ENCODE measurements at regions of chr9 and their contacts with region 1.

Region 1: GRCh38 chr9:1460143-1460769 is 410.1 kb downstream of the DMRT2 start:
- DNase-seq: peak; percentile 25
- ATAC-seq: peak; percentile 89
- H3K4me3 ChIP-seq: no peak overlapping the region
- H3K27ac ChIP-seq: no peak overlapping the region
- H3K4me1 ChIP-seq: no peaks in the 10 kb centered on the region
- H3K27me3 ChIP-seq: no peaks in the 10 kb centered on the region
- CTCF ChIP-seq: peak; percentile 79 to 83 (median 80)
- EP300 ChIP-seq: no peak
- POLR2A ChIP-seq: no peak
- RAD21 ChIP-seq: peak; percentile 99

Region 2: DNA sequence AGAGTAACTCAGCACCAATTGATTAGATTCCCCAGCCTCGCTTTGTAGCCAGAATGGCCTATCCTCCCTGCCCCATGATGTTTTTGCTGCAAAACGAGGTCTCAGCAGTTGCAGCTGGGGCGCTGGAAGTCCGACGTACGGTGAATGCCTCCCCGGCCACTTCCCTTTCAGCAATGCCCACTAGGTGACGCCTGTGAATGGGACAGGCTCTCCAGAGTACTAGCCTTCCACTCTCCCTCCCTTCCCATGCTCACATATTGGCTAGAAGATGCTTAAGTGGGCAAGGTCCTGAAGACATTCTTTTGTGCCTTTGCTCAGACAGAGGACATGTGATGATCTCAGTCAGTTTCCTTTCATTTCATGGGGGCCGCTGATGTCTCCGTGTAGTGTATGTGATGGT is 359.3 kb before region 1 on chr9:
- CTCF ChIA-PET with region 1: interaction called, 4 read pairs
- POLR2A ChIA-PET with region 1: no interaction called
- RAD21 ChIA-PET with region 1: no interaction called
- SMC1A ChIA-PET with region 1: interaction called, 12 read pairs
- in situ Hi-C with region 1: no loop called
- intact Hi-C with region 1: no loop called
- DNase-seq: no peak
- ATAC-seq: peak; percentile 59
- H3K4me3 ChIP-seq: no peak overlapping the region
- H3K27ac ChIP-seq: no peak overlapping the region
- H3K4me1 ChIP-seq: no peaks in the 10 kb centered on the region
- H3K27me3 ChIP-seq: no peaks in the 10 kb centered on the region
- CTCF ChIP-seq: peak; percentile 28 to 49 (median 36); a peak in 4 of 6 replicates
- EP300 ChIP-seq: no peak
- POLR2A ChIP-seq: no peak
- RAD21 ChIP-seq: peak; percentile 40; the same call in 1 of the 2 replicates

Region 3: GRCh38 chr9:1373085-1373844 is 87.0 kb before region 1 on chr9:
- CTCF ChIA-PET with region 1: no interaction called
- POLR2A ChIA-PET with region 1: no interaction called
- RAD21 ChIA-PET with region 1: no interaction called
- SMC1A ChIA-PET with region 1: no interaction called
- in situ Hi-C with region 1: no loop called
- intact Hi-C with region 1: no loop called
- DNase-seq: no peak
- ATAC-seq: no peak
- H3K4me3 ChIP-seq: no peak overlapping the region
- H3K27ac ChIP-seq: no peak overlapping the region
- H3K4me1 ChIP-seq: no peaks in the 10 kb centered on the region
- H3K27me3 ChIP-seq: no peaks in the 10 kb centered on the region
- CTCF ChIP-seq: no peak
- EP300 ChIP-seq: no peak
- POLR2A ChIP-seq: no peak
- RAD21 ChIP-seq: no peak

Region 4: GRCh38 chr9:1383899-1384455 is 76.3 kb before region 1 on chr9:
- CTCF ChIA-PET with region 1: no interaction called
- POLR2A ChIA-PET with region 1: no interaction called
- RAD21 ChIA-PET with region 1: no interaction called
- SMC1A ChIA-PET with region 1: no interaction called
- in situ Hi-C with region 1: no loop called
- intact Hi-C with region 1: no loop called
- DNase-seq: no peak
- ATAC-seq: no peak
- H3K4me3 ChIP-seq: no peak overlapping the region
- H3K27ac ChIP-seq: no peak overlapping the region
- H3K4me1 ChIP-seq: no peaks in the 10 kb centered on the region
- H3K27me3 ChIP-seq: peaks cover 0 to 3% of the 10 kb centered on the region in 2 experiments; a peak in 1 of 4 replicates
- CTCF ChIP-seq: no peak
- EP300 ChIP-seq: no peak
- POLR2A ChIP-seq: no peak
- RAD21 ChIP-seq: no peak

Region 5: DNA sequence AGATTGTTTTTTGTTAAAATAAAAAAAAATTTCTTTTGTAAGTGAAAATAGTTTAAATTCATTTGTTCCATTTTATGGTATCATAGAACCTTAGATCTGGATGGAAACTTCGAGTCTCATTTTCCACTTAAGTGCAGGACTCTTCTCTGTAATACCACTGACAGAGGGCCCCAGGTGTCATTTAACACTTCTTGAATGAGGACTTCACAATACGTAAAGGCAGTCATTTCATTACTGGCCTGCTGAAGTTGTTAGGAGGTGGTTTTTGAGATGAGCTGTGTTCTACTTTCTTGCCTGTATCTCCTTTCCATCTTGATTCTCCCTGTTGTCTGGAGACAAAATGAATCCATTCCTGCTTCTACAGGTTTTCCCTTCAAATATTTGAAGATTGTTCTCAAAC is 45.2 kb after region 1 on chr9:
- CTCF ChIA-PET with region 1: interaction called, 4 read pairs
- POLR2A ChIA-PET with region 1: no interaction called
- RAD21 ChIA-PET with region 1: interaction called, 3 read pairs
- SMC1A ChIA-PET with region 1: interaction called, 10 read pairs
- in situ Hi-C with region 1: no loop called
- intact Hi-C with region 1: no loop called
- DNase-seq: no peak
- ATAC-seq: peak; percentile 59
- H3K4me3 ChIP-seq: no peak overlapping the region
- H3K27ac ChIP-seq: no peak overlapping the region
- H3K4me1 ChIP-seq: no peaks in the 10 kb centered on the region
- H3K27me3 ChIP-seq: no peaks in the 10 kb centered on the region
- CTCF ChIP-seq: no peak
- EP300 ChIP-seq: no peak
- POLR2A ChIP-seq: no peak
- RAD21 ChIP-seq: no peak

Region 6: DNA sequence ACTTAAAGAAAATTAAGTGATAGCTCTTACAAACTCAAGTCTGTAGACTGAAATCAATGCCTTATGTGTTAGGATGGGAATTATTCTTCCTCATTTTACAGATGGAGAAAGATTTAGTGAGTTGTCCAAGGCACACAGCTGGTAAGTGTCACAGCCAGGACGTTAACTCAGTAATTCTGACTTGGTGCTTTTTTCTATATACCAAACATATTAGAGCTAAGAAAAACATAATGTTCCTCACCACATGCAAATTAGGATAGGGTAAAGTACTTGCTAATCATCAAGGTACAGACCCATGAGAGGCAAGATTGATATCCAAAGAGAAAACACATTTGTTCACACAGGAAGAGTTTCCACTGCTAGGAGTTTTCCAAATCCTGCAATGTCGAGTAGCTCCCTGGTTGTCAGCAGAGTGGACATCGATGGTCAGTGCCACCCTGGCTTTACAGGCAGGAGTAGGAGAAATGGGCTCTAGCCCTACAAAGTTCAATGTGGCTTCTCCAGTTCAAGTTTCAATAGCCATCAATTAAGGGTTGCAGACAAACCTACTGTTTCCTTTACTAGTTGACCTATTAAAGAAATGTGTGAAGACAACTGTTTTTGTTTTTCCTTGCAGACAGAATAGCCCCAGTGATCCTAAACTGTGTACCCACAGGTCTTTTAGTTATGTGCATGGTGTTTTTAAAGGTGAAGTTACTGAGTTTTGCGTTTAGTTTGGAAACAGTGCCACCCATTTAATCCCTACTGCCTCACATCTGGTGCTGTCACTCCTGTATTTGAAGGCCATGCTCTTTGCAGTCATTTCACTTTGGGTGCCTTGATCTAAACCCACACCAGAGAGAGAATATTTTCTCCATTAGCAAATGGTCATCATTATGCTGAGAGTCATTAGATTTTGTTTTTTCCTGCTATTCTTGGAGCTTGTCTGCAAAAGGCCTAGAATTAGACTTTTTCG is 94.1 kb after region 1 on chr9:
- CTCF ChIA-PET with region 1: interaction called, 10 read pairs
- POLR2A ChIA-PET with region 1: no interaction called
- RAD21 ChIA-PET with region 1: interaction called, 4 read pairs
- SMC1A ChIA-PET with region 1: interaction called, 11 read pairs
- in situ Hi-C with region 1: no loop called
- intact Hi-C with region 1: no loop called
- DNase-seq: peak; percentile 24
- ATAC-seq: peak; percentile 85
- H3K4me3 ChIP-seq: no peak overlapping the region
- H3K27ac ChIP-seq: no peak overlapping the region
- H3K4me1 ChIP-seq: no peaks in the 10 kb centered on the region
- H3K27me3 ChIP-seq: no peaks in the 10 kb centered on the region; a peak in 1 of 4 replicates
- CTCF ChIP-seq: no peak
- EP300 ChIP-seq: no peak; a peak in 1 of 4 replicates
- POLR2A ChIP-seq: no peak
- RAD21 ChIP-seq: no peak

Region 7: DNA sequence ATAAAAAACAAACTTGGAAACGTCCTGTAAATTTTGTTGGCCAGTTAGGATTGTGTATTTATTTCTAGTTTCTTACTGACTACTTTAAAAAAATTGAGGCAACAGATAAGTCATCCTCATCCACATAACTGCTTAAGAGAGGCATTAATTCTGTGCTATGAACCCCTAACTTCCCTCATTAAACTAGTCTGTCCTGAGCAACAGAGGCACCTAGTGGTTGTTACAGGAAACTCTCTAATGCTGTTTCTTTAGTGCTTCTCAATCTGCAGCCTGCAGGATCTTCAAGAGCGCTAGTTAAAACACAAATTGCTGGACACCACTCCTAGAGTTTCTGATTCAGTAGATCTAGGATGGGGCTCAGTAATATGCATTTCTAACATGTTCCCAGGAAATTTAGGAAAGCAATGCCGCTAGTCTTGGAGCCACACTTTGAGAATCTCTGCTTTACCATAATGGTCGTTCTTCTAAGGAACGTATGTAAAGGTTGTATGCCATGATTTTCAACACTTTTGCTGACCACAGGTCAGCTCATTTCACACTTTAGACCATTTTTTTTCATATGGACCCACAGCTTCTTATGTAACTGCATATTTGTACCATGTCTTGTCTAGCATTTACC is 144.8 kb after region 1 on chr9:
- CTCF ChIA-PET with region 1: interaction called, 247 read pairs
- POLR2A ChIA-PET with region 1: no interaction called
- RAD21 ChIA-PET with region 1: interaction called, 190 read pairs
- SMC1A ChIA-PET with region 1: interaction called, 275 read pairs
- in situ Hi-C with region 1: loop called (anchors 5 kb)
- intact Hi-C with region 1: loop called (anchors 1 kb)
- DNase-seq: peak; percentile 11
- ATAC-seq: peak; percentile 98
- H3K4me3 ChIP-seq: no peak overlapping the region
- H3K27ac ChIP-seq: no peak overlapping the region
- H3K4me1 ChIP-seq: no peaks in the 10 kb centered on the region
- H3K27me3 ChIP-seq: no peaks in the 10 kb centered on the region
- CTCF ChIP-seq: peak; percentile 69 to 73 (median 71)
- EP300 ChIP-seq: no peak
- POLR2A ChIP-seq: no peak
- RAD21 ChIP-seq: peak; percentile 99

Region 8: GRCh38 chr9:1837449-1838084 is 377.3 kb after region 1 on chr9:
- CTCF ChIA-PET with region 1: interaction called, 17 read pairs
- POLR2A ChIA-PET with region 1: no interaction called
- RAD21 ChIA-PET with region 1: interaction called, 9 read pairs
- SMC1A ChIA-PET with region 1: interaction called, 31 read pairs
- in situ Hi-C with region 1: no loop called
- intact Hi-C with region 1: loop called (anchors 10 kb)
- DNase-seq: peak; percentile 45
- ATAC-seq: peak; percentile 98
- H3K4me3 ChIP-seq: no peak overlapping the region
- H3K27ac ChIP-seq: no peak overlapping the region
- H3K4me1 ChIP-seq: no peaks in the 10 kb centered on the region
- H3K27me3 ChIP-seq: no peaks in the 10 kb centered on the region
- CTCF ChIP-seq: peak; percentile 70 to 77 (median 74)
- EP300 ChIP-seq: no peak
- POLR2A ChIP-seq: no peak
- RAD21 ChIP-seq: peak; percentile 71

Region 9: GRCh38 chr9:2087500-2088313 is 627.5 kb after region 1 on chr9:
- CTCF ChIA-PET with region 1: interaction called, 5 read pairs
- POLR2A ChIA-PET with region 1: no interaction called
- RAD21 ChIA-PET with region 1: no interaction called
- SMC1A ChIA-PET with region 1: no interaction called
- in situ Hi-C with region 1: no loop called
- intact Hi-C with region 1: loop called (anchors 10 kb)
- DNase-seq: peak; percentile 45
- ATAC-seq: peak; percentile 91
- H3K4me3 ChIP-seq: no peak overlapping the region
- H3K27ac ChIP-seq: peak overlapping the region; percentile 38
- H3K4me1 ChIP-seq: peaks cover 4% of the 10 kb centered on the region; the same call in 1 of the 2 replicates
- H3K27me3 ChIP-seq: no peaks in the 10 kb centered on the region
- CTCF ChIP-seq: peak; percentile 60 to 68 (median 65)
- EP300 ChIP-seq: no peak
- POLR2A ChIP-seq: no peak
- RAD21 ChIP-seq: peak; percentile 68

Measured in GM12878 (cell line).